ENCODE measurements at regions of chr12 and their contacts with region 1.

Region 1: DNA sequence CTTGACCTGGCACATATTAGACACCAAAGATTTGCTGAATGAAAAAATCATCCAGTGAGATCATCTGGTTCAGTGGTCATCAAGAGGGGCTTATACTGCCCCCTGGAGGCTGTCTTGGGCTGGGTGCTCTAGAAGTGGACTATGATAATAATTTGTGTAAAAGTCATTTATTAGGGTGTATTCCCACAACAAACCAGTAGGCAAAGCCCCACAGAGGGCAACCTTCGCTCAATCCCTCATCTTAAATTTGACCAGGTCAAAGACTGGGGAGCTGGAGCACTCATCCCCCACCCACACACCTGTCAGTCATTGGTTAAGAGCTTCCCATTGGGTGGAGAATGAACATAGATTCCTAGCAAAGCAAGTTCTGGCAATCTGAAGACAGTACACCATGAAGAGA is 20.0 kb upstream of the FICD start:
- DNase-seq: peak in 1 of 2 experiments; percentile 80
- H3K4me3 ChIP-seq: no peak overlapping the region
- H3K27ac ChIP-seq: no peak overlapping the region
- H3K4me1 ChIP-seq: no peaks in the 10 kb centered on the region
- H3K27me3 ChIP-seq: no peaks in the 10 kb centered on the region
- CTCF ChIP-seq: peak; percentile 45 to 84 (median 76)
- EP300 ChIP-seq: no peak
- POLR2A ChIP-seq: no peak
- RAD21 ChIP-seq: peak; percentile 87 to 89

Region 2: GRCh38 chr12:108063192-108063591 is 431.9 kb before region 1 on chr12:
- CTCF ChIA-PET with region 1: interaction called, 13 read pairs
- POLR2A ChIA-PET with region 1: no interaction called
- DNase-seq: no peak
- H3K4me3 ChIP-seq: no peak overlapping the region
- H3K27ac ChIP-seq: no peak overlapping the region
- H3K4me1 ChIP-seq: no peaks in the 10 kb centered on the region
- H3K27me3 ChIP-seq: no peaks in the 10 kb centered on the region; a peak in 1 of 7 replicates
- CTCF ChIP-seq: peak in 2 of 3 experiments; percentile 60 to 69; a peak in 2 of 4 replicates
- EP300 ChIP-seq: no peak
- POLR2A ChIP-seq: no peak
- RAD21 ChIP-seq: peak; percentile 83 to 88

Region 3: DNA sequence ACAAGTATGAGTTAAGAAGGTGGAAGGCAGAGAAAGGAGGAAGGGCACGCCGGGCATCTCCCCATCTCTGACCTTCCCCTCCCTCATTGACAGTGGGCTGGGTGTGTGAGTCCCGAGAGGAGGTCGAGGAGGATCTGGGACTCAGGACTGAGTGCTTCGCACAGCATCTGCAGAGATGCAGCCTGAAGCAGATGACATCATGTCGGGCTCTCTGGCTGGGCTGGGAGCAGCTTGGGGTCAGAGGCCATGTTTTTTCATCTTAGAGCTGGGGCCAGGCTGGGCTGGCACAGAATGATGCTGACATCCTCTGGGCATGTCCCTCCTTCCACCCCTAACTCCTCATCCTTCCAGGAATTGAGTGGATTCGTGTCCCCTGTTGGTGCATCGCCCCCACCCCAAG is 199.4 kb before region 1 on chr12:
- CTCF ChIA-PET with region 1: interaction called, 11 read pairs
- POLR2A ChIA-PET with region 1: no interaction called
- DNase-seq: no peak
- H3K4me3 ChIP-seq: no peak overlapping the region
- H3K27ac ChIP-seq: no peak overlapping the region
- H3K4me1 ChIP-seq: peaks cover 0 to 2% (median 0%) of the 10 kb centered on the region in 4 experiments; a peak in 1 of 7 replicates
- H3K27me3 ChIP-seq: no peaks in the 10 kb centered on the region
- CTCF ChIP-seq: no peak
- EP300 ChIP-seq: no peak
- POLR2A ChIP-seq: no peak
- RAD21 ChIP-seq: no peak

Region 4: GRCh38 chr12:108457006-108457733 is 37.9 kb before region 1 on chr12:
- CTCF ChIA-PET with region 1: interaction called, 11 read pairs
- POLR2A ChIA-PET with region 1: no interaction called
- DNase-seq: peak in 1 of 2 experiments; percentile 52
- H3K4me3 ChIP-seq: no peak overlapping the region
- H3K27ac ChIP-seq: no peak overlapping the region
- H3K4me1 ChIP-seq: peaks cover 0 to 3% (median 0%) of the 10 kb centered on the region in 4 experiments; a peak in 2 of 7 replicates
- H3K27me3 ChIP-seq: no peaks in the 10 kb centered on the region
- CTCF ChIP-seq: peak in 2 of 3 experiments; percentile 84 to 91; a peak in 3 of 4 replicates
- EP300 ChIP-seq: no peak
- POLR2A ChIP-seq: no peak
- RAD21 ChIP-seq: peak; percentile 87 to 94

Region 5: GRCh38 chr12:108483213-108484059 is 11.6 kb before region 1 on chr12:
- CTCF ChIA-PET with region 1: interaction called, 34 read pairs
- POLR2A ChIA-PET with region 1: no interaction called
- DNase-seq: no peak
- H3K4me3 ChIP-seq: no peak overlapping the region
- H3K27ac ChIP-seq: no peak overlapping the region
- H3K4me1 ChIP-seq: peaks cover 0 to 5% (median 3%) of the 10 kb centered on the region in 4 experiments; a peak in 3 of 7 replicates
- H3K27me3 ChIP-seq: no peaks in the 10 kb centered on the region
- CTCF ChIP-seq: no peak
- EP300 ChIP-seq: no peak
- POLR2A ChIP-seq: no peak
- RAD21 ChIP-seq: no peak